Activated B cell treated with CpG ODN at 0.5 μM for 24 hours (primary cell): ENCODE measurements at regions of chr5 and their contacts with region 1.

Region 1: DNA sequence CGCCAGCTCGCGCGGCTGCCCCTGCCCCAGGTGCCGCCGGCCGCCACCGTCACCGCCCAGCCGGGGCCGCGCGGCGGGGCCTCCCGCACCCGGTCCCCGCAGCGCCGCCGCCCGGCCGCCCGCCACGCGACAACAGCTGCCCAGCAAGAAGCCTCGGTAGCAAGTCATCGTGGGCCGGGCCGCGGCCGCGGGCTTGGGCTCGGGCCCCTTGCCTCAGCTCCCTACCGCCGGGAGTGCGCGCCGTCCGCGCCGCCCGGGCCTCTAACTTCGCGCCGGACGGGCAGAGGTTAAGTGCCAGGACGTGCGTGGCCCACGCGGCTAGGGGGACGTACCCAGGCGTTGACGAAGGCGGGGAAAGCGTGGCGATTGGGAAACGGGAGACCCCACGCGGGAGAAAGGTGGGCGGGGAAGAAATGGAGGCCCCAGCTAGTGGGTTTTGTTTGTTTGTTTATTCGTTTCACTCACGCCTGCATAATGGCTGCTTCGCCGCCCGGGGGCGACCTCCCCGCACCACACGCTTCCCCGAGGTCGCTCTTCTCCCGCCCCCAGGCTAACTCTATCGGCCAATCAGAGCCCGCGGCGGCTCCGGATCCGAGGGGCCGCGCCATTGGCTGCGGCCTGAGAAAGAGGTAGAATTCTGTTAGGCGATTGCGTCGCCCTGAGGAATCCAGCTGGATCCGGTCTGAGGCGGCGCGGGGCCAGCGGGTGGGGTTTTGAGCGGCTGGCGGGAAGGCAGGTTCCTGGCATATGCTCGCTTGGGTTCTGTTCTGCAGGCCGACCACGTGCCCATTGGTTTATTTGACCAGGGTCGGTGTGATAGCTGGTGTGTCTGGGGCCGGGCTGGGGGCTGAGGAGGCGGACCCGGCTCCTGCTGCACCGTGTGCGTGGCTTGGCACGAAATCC is at the start of gene NADK2:
- DNase-seq: peak; percentile 87
- ATAC-seq: peak; percentile 87
- H3K4me3 Mint-ChIP-seq: peak within 1 kb of the TSS; percentile 91
- H3K27ac Mint-ChIP-seq: peak within 1 kb of the TSS; percentile 95
- H3K4me1 Mint-ChIP-seq: peaks cover 49% of the 10 kb centered on the region
- H3K27me3 Mint-ChIP-seq: no peaks in the 10 kb centered on the region
- CTCF ChIP-seq: no peak
- total RNA-seq, gene NADK2: 13.3 and 18.2 TPM in 2 replicates

Region 2: GRCh38 chr5:35212122-35212982 is 1029.5 kb before region 1 on chr5:
- CTCF ChIA-PET with region 1: no interaction called
- POLR2A ChIA-PET with region 1: no interaction called
- intact Hi-C with region 1: loop called (anchors 5 kb)
- DNase-seq: no peak
- ATAC-seq: peak; percentile 86
- H3K4me3 Mint-ChIP-seq: peak overlapping the region; percentile 22
- H3K27ac Mint-ChIP-seq: peak overlapping the region; percentile 92
- H3K4me1 Mint-ChIP-seq: peaks cover 26% of the 10 kb centered on the region
- H3K27me3 Mint-ChIP-seq: peaks cover 2% of the 10 kb centered on the region
- CTCF ChIP-seq: no peak

Region 3: DNA sequence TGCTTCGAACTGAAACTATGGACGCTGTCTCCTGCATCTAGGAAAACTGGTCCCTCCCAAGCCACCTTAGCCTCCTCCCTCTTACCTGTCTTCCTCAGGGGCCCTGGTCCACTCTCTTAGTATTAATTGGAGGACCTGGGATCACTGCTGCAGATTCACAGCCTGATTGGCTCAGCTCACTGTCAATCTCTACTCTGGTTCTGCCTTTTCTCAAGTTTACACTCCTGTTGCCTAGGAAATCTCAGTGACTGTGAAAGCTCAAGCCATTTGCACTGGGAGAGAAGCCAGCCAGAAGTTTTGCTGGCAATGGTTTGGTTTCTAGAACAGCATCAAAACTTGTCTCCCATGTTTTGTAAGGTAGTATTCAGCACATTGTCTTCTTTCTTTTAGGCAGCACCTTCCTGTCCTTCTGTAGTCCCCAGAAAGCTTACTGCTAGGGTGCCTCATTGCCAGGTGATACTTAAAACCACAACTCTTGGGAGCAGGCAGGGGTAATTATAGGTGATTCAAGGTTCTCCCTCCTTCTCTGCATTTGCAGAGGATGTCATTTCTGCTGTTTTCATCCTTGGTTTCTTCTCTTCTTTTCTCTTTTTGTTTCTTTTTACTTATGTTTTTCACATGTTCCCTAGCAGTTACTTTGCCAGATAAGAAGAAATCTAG is 303.2 kb before region 1 on chr5 and contains the start of gene CAPSL:
- CTCF ChIA-PET with region 1: no interaction called
- POLR2A ChIA-PET with region 1: no interaction called
- intact Hi-C with region 1: no loop called
- DNase-seq: no peak
- ATAC-seq: no peak
- H3K4me3 Mint-ChIP-seq: no peak within 1 kb of the TSS
- H3K27ac Mint-ChIP-seq: no peak within 1 kb of the TSS
- H3K4me1 Mint-ChIP-seq: no peaks in the 10 kb centered on the region
- H3K27me3 Mint-ChIP-seq: no peaks in the 10 kb centered on the region
- CTCF ChIP-seq: no peak
- total RNA-seq, gene CAPSL: not detected in 2 replicates

Region 4: GRCh38 chr5:36252722-36253365 is 11.0 kb after region 1 on chr5:
- CTCF ChIA-PET with region 1: interaction called, 3 read pairs
- POLR2A ChIA-PET with region 1: interaction called, 6 read pairs
- intact Hi-C with region 1: loop called (anchors 1 kb)
- DNase-seq: no peak
- ATAC-seq: no peak
- H3K4me3 Mint-ChIP-seq: no peak overlapping the region
- H3K27ac Mint-ChIP-seq: no peak overlapping the region
- H3K4me1 Mint-ChIP-seq: no peaks in the 10 kb centered on the region
- H3K27me3 Mint-ChIP-seq: no peaks in the 10 kb centered on the region
- CTCF ChIP-seq: no peak

Region 5: DNA sequence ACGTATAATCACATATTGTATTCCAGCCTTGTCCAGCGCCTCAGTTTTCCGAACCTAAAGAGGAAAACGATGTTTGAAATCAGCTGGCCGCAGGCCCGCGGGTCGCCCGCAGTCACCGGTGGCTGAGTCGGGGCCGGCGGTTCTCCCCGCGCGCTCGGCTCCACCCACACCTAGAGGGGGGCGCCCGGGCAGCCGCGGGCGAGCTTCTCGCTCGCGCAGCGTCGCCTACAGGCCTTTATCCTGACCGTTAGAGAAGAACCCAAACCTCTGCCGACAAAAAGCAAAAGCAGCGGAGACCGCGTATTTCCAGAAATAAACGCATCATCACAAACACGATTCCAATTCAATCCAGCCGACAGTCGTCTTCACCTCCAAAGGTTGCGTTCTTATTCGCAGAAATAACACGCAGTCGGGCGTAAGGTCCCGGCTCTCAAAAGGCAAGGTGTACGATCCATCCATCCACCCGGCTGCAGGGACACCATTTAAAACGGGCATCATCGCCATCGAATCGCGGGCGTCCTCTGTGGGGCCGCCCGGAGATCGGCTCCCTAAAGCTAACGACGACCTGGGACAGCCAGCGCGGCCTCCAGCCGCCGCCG is 634.0 kb after region 1 on chr5:
- CTCF ChIA-PET with region 1: interaction called, 3 read pairs
- POLR2A ChIA-PET with region 1: interaction called, 22 read pairs
- intact Hi-C with region 1: loop called (anchors 2 kb)
- DNase-seq: peak; percentile 75
- ATAC-seq: peak; percentile 69
- H3K4me3 Mint-ChIP-seq: peak overlapping the region; percentile 93
- H3K27ac Mint-ChIP-seq: peak overlapping the region; percentile 93
- H3K4me1 Mint-ChIP-seq: peaks cover 46% of the 10 kb centered on the region
- H3K27me3 Mint-ChIP-seq: no peaks in the 10 kb centered on the region
- CTCF ChIP-seq: no peak

Region 6: DNA sequence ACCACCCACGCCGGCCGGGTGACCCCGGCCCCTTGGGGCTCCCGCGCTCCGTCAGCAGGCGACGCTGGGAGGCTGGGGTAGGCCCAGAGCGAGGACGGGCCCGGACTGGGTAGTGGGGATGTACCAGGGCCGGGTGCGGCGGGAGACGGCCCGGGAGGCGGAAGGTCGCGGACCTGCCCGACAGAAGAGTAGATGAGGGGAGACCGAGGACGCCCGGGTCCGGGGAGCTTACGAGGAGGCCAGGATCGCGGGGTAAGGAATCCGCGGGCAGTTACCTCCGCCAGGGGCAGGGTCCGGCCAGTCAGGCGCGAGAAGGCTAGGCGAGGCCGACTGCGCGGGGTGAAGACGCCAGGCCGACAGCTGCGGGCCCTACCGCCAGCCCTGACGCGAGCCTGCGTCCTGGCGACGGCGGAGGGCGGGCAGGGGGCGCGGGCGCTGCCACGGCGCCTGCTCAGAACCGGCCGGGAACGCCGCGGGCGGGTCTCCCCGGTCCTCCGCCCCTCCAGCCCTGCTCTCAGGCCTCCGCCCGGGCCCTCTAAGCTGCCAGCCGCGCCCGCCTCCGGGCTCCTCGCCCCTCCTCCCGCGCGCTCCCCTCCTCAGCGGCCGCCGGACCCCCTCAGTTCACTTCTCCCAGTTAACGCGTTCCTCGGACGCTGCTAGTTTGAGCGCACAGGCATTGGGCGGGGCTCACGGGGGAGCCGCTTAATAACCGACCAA is 1007.2 kb after region 1 on chr5 and contains the start of gene CPLANE1:
- CTCF ChIA-PET with region 1: no interaction called
- POLR2A ChIA-PET with region 1: no interaction called
- intact Hi-C with region 1: loop called (anchors 1 kb)
- DNase-seq: peak; percentile 72
- ATAC-seq: peak; percentile 89
- H3K4me3 Mint-ChIP-seq: peak within 1 kb of the TSS; percentile 91
- H3K27ac Mint-ChIP-seq: peak within 1 kb of the TSS; percentile 76
- H3K4me1 Mint-ChIP-seq: peaks cover 8% of the 10 kb centered on the region
- H3K27me3 Mint-ChIP-seq: no peaks in the 10 kb centered on the region
- CTCF ChIP-seq: no peak
- total RNA-seq, gene CPLANE1: 8.8 and 11.7 TPM in 2 replicates